Mammary epithelial cell (primary cell): ENCODE measurements at regions of chr10 and their contacts with region 1.

Region 1: DNA sequence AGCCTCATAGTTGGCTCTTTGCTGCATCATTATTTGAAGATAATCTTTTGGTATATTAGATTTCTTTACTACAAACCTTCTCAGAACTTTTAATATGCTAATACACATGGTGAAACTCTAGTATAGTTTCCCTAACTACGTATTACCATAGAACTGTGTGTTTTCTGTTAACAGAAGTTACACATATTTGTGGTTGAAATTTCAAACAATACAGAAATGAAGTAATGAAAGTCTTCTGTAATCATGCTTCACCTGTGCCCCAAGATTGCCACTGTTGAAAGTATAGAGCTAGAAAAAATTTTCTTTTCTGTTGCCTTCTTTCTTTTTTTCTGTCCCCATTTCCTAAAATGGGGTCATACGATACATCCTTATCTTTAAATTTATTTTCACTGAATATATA is 9.1 kb downstream of the BMPR1A start:
- DNase-seq: no peak
- H3K4me3 ChIP-seq: no peak overlapping the region
- H3K27ac ChIP-seq: no peak overlapping the region
- H3K4me1 ChIP-seq: no peaks in the 10 kb centered on the region
- H3K27me3 ChIP-seq: no peaks in the 10 kb centered on the region
- CTCF ChIP-seq: no peak

Region 2: GRCh38 chr10:86693721-86694369 is 71.7 kb before region 1 on chr10:
- CTCF ChIA-PET with region 1: no interaction called
- dilution Hi-C with region 1: no loop called
- in situ Hi-C with region 1: no loop called
- intact Hi-C with region 1: no loop called
- DNase-seq: no peak
- H3K4me3 ChIP-seq: no peak overlapping the region
- H3K27ac ChIP-seq: no peak overlapping the region
- H3K4me1 ChIP-seq: no peaks in the 10 kb centered on the region
- H3K27me3 ChIP-seq: no peaks in the 10 kb centered on the region
- CTCF ChIP-seq: peak; percentile 58 to 66

Region 3: GRCh38 chr10:86744067-86744725 is 21.4 kb before region 1 on chr10:
- CTCF ChIA-PET with region 1: interaction called, 23 read pairs
- dilution Hi-C with region 1: no loop called
- in situ Hi-C with region 1: no loop called
- intact Hi-C with region 1: no loop called
- DNase-seq: no peak
- H3K4me3 ChIP-seq: no peak overlapping the region
- H3K27ac ChIP-seq: no peak overlapping the region
- H3K4me1 ChIP-seq: no peaks in the 10 kb centered on the region
- H3K27me3 ChIP-seq: no peaks in the 10 kb centered on the region
- CTCF ChIP-seq: no peak

Region 4: DNA sequence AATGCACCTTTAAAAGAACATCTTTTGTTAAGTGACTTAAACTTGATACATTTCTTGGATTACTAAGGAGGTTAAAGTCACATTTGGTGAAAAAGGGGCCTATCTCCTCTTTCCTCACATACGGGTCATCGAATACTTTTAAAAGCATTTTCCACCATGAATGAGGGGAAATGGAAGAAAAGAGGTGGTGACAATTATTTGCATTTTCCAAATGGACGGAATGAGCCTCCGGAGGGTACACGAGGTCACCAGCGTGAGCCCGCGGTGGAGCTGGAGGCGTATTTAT is 10.2 kb before region 1 on chr10:
- CTCF ChIA-PET with region 1: no interaction called
- dilution Hi-C with region 1: no loop called
- in situ Hi-C with region 1: no loop called
- intact Hi-C with region 1: no loop called
- DNase-seq: no peak
- H3K4me3 ChIP-seq: peak overlapping the region; percentile 63 to 69 (median 68)
- H3K27ac ChIP-seq: peak overlapping the region; percentile 87
- H3K4me1 ChIP-seq: peaks cover 18% of the 10 kb centered on the region
- H3K27me3 ChIP-seq: no peaks in the 10 kb centered on the region
- CTCF ChIP-seq: no peak